Activated naive CD8-positive, alpha-beta T cell treated with anti-CD3 and anti-CD28 coated beads, Interleukin-2, amount 10 ng/mL, durations not matched to agents 7 days and 5 days (primary cell): ENCODE measurements at regions of chr14 and their contacts with region 1.

Region 1: DNA sequence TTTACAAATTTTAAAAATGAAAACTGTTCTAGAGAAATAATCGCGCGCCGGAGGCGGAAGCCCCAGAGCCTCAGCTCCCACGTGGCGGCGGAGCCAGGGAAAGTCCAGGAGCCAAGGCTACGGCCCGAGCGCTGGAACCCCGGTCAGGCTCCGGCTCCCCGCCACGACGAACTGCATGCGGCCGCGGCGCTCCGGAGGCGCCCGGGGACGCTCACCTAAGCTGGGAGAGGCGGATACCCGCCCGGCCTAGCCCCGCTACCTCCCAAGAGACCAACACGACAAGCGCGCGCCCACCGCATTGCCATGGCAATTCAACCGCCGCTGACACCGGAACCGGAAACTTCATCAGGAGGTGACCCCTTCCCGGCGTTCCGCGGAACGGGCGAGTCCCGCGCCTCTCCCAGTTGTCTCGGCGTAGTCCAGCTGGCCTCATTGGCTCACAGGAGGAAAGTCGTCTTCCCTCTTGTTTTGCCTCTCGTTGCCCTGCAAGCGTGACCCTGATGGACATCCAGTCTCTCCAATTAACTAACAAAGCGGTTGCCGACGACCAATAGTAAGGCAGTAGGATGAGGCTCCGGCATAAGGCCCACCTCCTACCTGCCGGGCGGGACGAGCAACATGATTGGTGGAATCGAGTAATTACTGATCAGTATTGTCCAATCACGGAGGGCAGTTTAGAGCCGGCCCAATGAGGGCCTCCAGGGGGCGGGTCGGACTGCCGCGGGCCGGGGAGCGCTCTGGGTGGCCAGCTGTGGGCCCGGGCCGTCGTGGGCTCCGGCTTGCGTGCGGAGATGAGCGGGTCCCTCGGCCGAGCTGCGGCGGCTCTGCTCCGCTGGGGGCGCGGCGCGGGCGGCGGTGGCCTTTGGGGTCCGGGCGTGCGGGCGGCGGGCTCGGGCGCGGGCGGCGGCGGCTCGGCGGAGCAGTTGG is at the start of gene GLRX5:
- DNase-seq: peak; percentile 97
- ATAC-seq: peak; percentile 93
- H3K4me3 Mint-ChIP-seq: peak within 1 kb of the TSS; percentile 96
- H3K27ac Mint-ChIP-seq: peak within 1 kb of the TSS; percentile 93
- H3K4me1 Mint-ChIP-seq: peaks cover 44% of the 10 kb centered on the region
- H3K27me3 Mint-ChIP-seq: no peaks in the 10 kb centered on the region
- total RNA-seq, gene GLRX5: 33.8 to 34.7 TPM

Region 2: GRCh38 chr14:95515596-95516552 is 18.7 kb before region 1 on chr14:
- POLR2A ChIA-PET with region 1: interaction called, 36 read pairs
- DNase-seq: peak; percentile 84
- ATAC-seq: peak; percentile 85
- H3K4me3 Mint-ChIP-seq: peak overlapping the region; percentile 92
- H3K27ac Mint-ChIP-seq: peak overlapping the region; percentile 87
- H3K4me1 Mint-ChIP-seq: peaks cover 58% of the 10 kb centered on the region
- H3K27me3 Mint-ChIP-seq: no peaks in the 10 kb centered on the region

Region 3: DNA sequence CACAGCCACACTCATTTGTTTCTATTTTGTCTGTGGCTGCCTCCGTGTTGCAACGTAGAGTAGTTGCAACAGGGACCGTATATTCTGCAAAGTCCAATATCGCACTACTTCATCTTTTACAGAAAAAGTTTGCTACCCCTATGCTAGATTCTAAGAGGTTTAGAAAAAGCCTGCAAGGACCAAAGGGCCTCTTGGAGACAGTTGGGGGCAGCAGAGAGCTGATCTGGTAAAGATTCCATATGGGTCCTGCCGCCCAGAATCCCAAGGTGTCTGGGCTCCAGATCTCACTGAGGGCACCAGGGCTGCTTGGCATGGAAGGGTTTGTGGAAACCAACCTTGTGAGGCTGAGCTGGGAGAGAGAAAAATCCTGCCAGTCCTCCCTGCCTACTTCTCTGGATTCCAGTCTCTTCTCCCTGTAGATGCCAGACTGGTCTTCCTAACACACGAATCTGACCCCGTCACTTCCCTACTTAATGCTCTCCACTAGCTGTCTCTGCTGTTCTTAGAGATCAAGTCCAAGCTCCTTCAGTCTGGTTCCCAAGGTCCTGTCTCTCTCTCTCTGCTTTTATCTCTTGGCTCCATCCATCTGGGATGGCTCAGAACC is 74.9 kb after region 1 on chr14:
- POLR2A ChIA-PET with region 1: no interaction called
- DNase-seq: no peak
- ATAC-seq: no peak
- H3K4me3 Mint-ChIP-seq: no peak overlapping the region
- H3K27ac Mint-ChIP-seq: no peak overlapping the region
- H3K4me1 Mint-ChIP-seq: no peaks in the 10 kb centered on the region
- H3K27me3 Mint-ChIP-seq: peaks cover 20% of the 10 kb centered on the region

Region 4: DNA sequence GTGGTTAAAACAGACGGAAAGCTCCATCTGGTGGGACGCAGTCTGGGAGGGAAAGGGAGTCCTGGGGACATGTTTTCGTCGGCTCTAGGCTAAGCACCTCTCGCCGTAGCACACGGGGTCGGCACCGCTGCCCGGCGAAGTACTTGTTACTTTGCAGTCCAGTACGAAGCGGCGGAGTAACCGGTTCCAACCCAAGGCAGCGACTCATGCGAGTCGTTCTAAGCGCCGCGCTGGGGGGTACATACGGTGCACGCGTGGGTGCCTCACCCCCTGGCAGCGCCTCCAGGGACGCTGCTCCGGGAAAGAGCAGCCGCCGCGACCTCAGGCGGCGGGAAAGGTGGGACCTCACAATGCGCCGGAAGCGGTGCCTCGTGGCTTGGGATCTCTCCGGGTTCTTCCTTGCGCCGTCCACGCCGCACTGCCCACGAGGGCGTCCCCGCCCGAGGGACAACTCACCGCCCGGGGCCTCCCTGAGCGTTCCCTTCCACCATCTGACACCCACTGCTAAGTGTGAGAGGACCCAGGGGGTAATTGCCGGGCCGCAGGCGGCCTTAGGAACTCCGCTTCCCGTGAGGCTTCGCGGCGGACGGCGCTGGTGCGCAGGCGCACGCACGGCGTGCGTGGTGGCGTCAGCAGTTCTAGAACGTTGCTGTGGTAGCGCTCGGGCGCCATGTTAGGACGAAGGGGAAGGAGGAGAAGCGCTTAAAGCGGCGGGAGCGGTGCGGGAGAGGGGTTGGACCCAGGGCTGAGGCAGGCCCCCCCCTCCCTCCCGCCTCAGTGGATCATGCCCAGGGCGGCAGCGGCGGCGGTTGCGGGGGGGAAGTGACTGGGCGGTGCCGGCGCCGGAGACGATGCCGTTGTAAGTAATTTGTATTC is 967.4 kb after region 1 on chr14 and contains the start of gene PAPOLA:
- POLR2A ChIA-PET with region 1: no interaction called
- DNase-seq: peak; percentile 95
- ATAC-seq: peak; percentile 94
- H3K4me3 Mint-ChIP-seq: peak within 1 kb of the TSS; percentile 91
- H3K27ac Mint-ChIP-seq: peak within 1 kb of the TSS; percentile 91
- H3K4me1 Mint-ChIP-seq: peaks cover 35% of the 10 kb centered on the region
- H3K27me3 Mint-ChIP-seq: peaks cover 6% of the 10 kb centered on the region
- total RNA-seq, gene PAPOLA: 168 to 175 TPM